SK-N-SH (cell line): ENCODE measurements at regions of chr1 and their contacts with region 1.

Region 1: GRCh38 chr1:44594871-44595746 is 79.2 kb downstream of the TMEM53 start:
- DNase-seq: peak; percentile 92
- H3K4me3 ChIP-seq: no peak overlapping the region
- H3K27ac ChIP-seq: no peak overlapping the region
- H3K4me1 ChIP-seq: no peaks in the 10 kb centered on the region
- H3K27me3 ChIP-seq: no peaks in the 10 kb centered on the region; the same call in 1 of the 2 replicates
- CTCF ChIP-seq: peak; percentile 95
- EP300 ChIP-seq: no peak
- RAD21 ChIP-seq: peak; percentile 81

Region 2: GRCh38 chr1:44227211-44227610 is 367.9 kb before region 1 on chr1:
- CTCF ChIA-PET with region 1: interaction called, 11 read pairs
- POLR2A ChIA-PET with region 1: no interaction called
- DNase-seq: peak; percentile 3
- H3K4me3 ChIP-seq: no peak overlapping the region
- H3K27ac ChIP-seq: no peak overlapping the region
- H3K4me1 ChIP-seq: no peaks in the 10 kb centered on the region
- H3K27me3 ChIP-seq: no peaks in the 10 kb centered on the region
- CTCF ChIP-seq: no peak
- EP300 ChIP-seq: no peak
- RAD21 ChIP-seq: no peak

Region 3: DNA sequence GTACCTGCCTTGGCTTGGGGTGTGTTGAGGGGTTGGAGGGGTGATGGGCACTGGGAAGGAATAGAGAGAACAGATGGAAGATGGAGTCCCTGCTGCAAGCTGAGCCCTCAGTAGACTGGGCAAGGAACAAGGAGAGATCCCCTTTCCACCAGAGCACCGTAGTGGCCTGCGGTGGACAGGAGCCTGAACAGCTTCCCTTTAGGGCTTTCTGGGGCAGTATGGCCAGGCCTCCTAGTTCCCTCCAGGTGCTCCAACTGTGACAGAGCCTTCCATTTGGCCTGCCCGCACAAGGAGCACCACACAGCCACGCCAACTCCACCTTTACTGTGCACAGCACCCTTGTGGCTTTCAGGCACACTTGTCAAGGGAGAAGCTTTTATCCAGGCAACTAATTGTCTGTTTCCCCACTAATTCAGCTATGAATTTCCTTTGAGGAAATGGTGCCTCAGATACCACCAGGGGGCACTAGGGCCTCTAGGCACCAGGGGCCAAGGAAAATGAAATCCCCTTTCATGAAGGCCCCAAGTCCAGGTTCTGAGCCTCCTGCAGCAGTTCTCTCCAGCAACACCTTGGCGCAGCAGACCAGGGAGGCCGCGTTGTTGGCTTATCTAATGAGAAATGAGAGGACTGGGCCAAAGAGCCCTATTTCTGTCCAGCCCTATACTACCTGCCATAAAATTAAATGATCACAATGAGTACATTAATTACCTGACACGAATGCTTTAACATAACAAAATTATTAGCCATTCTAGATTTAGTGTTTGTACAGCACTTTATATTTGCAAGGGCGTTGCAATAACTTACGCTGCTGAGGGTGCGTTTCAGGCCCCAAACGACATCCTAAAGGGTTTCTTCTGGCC is 217.0 kb before region 1 on chr1:
- CTCF ChIA-PET with region 1: interaction called, 17 read pairs
- POLR2A ChIA-PET with region 1: no interaction called
- DNase-seq: peak; percentile 43
- H3K4me3 ChIP-seq: no peak overlapping the region
- H3K27ac ChIP-seq: no peak overlapping the region
- H3K4me1 ChIP-seq: no peaks in the 10 kb centered on the region
- H3K27me3 ChIP-seq: peaks cover 26% of the 10 kb centered on the region
- CTCF ChIP-seq: peak; percentile 68
- EP300 ChIP-seq: no peak
- RAD21 ChIP-seq: peak; percentile 58

Region 4: DNA sequence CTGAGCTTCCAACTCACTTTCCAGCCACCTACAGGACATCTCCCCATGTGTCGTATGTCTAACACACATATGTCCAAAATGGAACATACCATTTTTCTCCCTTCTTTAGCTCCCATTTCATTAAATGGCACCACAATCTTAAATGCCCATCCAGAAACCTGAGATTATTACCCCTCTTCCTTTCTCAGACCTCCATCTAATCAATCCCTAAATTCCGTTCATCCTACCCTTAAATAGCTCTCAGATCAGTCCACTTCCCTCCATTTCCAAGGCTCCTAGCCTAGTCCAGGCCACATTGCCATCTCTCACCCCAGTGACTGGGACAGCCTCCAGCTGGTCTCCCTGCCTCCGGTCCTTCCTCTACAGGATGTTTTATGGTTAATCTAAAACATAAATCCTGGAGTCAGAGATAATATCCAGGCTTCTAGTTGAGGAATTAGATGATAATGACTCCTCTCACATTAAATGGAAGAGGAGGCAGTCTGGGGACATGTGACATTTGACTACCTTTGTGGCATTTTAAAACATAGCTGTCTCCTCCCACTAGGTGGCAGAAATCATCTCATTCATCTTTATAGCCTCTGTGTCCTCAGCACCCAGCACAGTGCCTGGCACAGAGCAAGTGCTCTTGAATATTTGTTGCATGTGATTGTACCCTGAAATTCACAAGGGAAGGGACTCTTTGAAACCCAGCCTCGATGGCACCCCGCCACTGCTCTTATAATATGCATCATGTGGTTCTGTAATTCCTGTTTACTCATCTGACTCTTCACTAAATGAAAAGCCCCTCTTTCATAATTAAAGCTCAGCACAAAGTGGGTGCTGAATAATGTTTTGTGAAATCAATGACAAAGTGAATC is 23.2 kb before region 1 on chr1:
- CTCF ChIA-PET with region 1: interaction called, 28 read pairs
- POLR2A ChIA-PET with region 1: no interaction called
- DNase-seq: peak; percentile 45
- H3K4me3 ChIP-seq: peak overlapping the region in 1 of 2 experiments; percentile 23; a peak in 1 of 4 replicates
- H3K27ac ChIP-seq: no peak overlapping the region
- H3K4me1 ChIP-seq: no peaks in the 10 kb centered on the region
- H3K27me3 ChIP-seq: peaks cover 20% of the 10 kb centered on the region; the same call in 1 of the 2 replicates
- CTCF ChIP-seq: peak; percentile 53
- EP300 ChIP-seq: no peak
- RAD21 ChIP-seq: peak; percentile 51

Region 5: DNA sequence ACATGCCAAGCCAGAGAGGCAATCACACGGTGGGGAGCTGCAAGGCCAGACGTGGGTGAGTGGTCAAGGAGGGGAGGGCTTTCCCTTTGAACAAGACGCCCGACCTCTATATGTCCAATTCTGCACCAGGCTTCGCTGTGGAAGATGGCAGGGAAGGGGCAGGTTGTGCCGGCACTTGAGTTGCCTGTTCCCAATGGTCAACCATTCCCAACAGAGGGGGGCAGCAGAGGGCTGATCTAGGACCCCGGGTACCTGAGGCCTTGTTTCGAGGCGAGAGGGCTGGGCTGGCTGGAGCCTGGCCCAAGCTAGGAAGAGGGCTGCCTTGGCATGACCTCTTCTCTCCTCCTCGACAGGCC is 14.3 kb after region 1 on chr1:
- CTCF ChIA-PET with region 1: interaction called, 27 read pairs
- POLR2A ChIA-PET with region 1: no interaction called
- DNase-seq: peak; percentile 76
- H3K4me3 ChIP-seq: no peak overlapping the region
- H3K27ac ChIP-seq: no peak overlapping the region
- H3K4me1 ChIP-seq: peaks cover 0 to 3% of the 10 kb centered on the region in 2 experiments; a peak in 2 of 4 replicates
- H3K27me3 ChIP-seq: no peaks in the 10 kb centered on the region
- CTCF ChIP-seq: peak; percentile 59
- EP300 ChIP-seq: no peak
- RAD21 ChIP-seq: peak; percentile 78

Region 6: GRCh38 chr1:44640200-44640853 is 45.2 kb after region 1 on chr1:
- CTCF ChIA-PET with region 1: interaction called, 10 read pairs
- POLR2A ChIA-PET with region 1: no interaction called
- DNase-seq: no peak
- H3K4me3 ChIP-seq: no peak overlapping the region
- H3K27ac ChIP-seq: no peak overlapping the region
- H3K4me1 ChIP-seq: peaks cover 0 to 53% of the 10 kb centered on the region in 2 experiments; a peak in 1 of 4 replicates
- H3K27me3 ChIP-seq: no peaks in the 10 kb centered on the region
- CTCF ChIP-seq: no peak
- EP300 ChIP-seq: no peak
- RAD21 ChIP-seq: no peak

Region 7: DNA sequence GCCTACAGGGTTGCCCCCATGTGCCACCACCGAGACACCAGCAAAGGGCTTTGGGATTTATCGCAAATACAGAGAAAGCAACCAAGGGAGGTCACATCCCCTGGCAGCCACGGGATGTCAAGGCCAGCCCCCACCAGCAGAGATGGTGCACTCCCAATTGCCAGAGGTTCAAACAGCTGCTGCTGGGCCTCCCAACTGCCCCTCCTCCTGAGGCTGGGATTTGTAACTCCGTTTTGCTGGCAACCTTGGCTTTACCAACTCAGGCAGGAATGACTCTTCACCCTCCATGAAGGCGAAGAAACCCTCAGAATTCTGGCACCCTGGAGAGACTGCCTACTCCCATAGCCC is 67.5 kb after region 1 on chr1:
- CTCF ChIA-PET with region 1: no interaction called
- POLR2A ChIA-PET with region 1: no interaction called
- DNase-seq: no peak
- H3K4me3 ChIP-seq: no peak overlapping the region
- H3K27ac ChIP-seq: no peak overlapping the region
- H3K4me1 ChIP-seq: peaks cover 0 to 14% of the 10 kb centered on the region in 2 experiments; a peak in 1 of 4 replicates
- H3K27me3 ChIP-seq: no peaks in the 10 kb centered on the region
- CTCF ChIP-seq: no peak
- EP300 ChIP-seq: no peak
- RAD21 ChIP-seq: no peak